IMR-90 (cell line): ENCODE measurements at regions of chr4 and their contacts with region 1.

Region 1: GRCh38 chr4:117529401-117529800 is 444.0 kb upstream of the TRAM1L1 start:
- DNase-seq: no peak
- ATAC-seq: no peak
- H3K4me3 ChIP-seq: no peak overlapping the region
- H3K27ac ChIP-seq: no peak overlapping the region
- H3K4me1 ChIP-seq: no peaks in the 10 kb centered on the region
- H3K27me3 ChIP-seq: no peaks in the 10 kb centered on the region
- CTCF ChIP-seq: no peak
- POLR2A ChIP-seq: no peak
- RAD21 ChIP-seq: no peak

Region 2: GRCh38 chr4:117495802-117496201 is 33.6 kb before region 1 on chr4:
- CTCF ChIA-PET with region 1: no interaction called
- POLR2A ChIA-PET with region 1: no interaction called
- dilution Hi-C with region 1: no loop called
- in situ Hi-C with region 1: no loop called
- intact Hi-C with region 1: loop called (anchors 1 kb)
- DNase-seq: no peak
- ATAC-seq: no peak
- H3K4me3 ChIP-seq: no peak overlapping the region
- H3K27ac ChIP-seq: no peak overlapping the region
- H3K4me1 ChIP-seq: no peaks in the 10 kb centered on the region
- H3K27me3 ChIP-seq: no peaks in the 10 kb centered on the region
- CTCF ChIP-seq: no peak
- POLR2A ChIP-seq: no peak
- RAD21 ChIP-seq: no peak